ENCODE measurements at regions of chr4 and their contacts with region 1.

Region 1: DNA sequence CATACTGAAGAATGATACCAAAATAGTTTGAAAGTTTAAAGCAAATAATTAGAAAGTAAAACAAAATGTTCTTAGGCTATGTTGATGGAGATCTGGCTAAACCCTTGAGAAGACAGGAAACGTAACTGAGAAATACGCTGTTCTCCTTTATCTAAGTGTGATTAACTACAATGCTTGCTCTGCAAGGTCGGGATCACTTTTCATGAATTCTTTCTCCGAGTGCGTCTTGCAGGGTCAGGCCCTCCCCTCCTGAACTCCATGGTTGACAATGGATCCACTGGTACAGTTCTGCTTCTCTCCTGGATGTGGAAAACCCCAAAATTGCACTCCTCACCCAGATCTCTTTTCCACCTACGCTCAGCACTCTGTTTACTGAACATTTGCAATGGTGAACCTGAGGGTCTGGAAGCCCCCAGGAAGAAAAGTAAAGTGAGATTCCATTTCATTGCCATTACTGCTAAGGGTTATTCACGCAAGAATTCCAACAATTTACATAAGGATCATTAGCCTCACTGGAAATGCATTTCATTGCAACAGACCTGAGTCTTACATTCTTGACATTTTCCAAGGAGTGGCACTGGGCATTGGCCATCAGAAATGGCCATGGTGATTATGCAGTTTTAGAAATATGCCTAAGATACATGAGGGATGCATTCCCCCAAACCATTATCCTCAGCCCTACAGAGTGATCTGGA is 24.6 kb upstream of the WWC2 start:
- DNase-seq: no peak
- ATAC-seq: no peak
- H3K4me3 ChIP-seq: no peak overlapping the region
- H3K27ac ChIP-seq: no peak overlapping the region
- H3K4me1 ChIP-seq: no peaks in the 10 kb centered on the region
- H3K27me3 ChIP-seq: no peaks in the 10 kb centered on the region

Region 2: GRCh38 chr4:183014361-183015084 is 59.9 kb before region 1 on chr4:
- intact Hi-C with region 1: no loop called
- DNase-seq: no peak
- ATAC-seq: no peak
- H3K4me3 ChIP-seq: no peak overlapping the region
- H3K27ac ChIP-seq: no peak overlapping the region
- H3K4me1 ChIP-seq: no peaks in the 10 kb centered on the region
- H3K27me3 ChIP-seq: peaks cover 0 to 1% of the 10 kb centered on the region in 2 donors

Region 3: GRCh38 chr4:183256756-183257385 is 182.4 kb after region 1 on chr4:
- intact Hi-C with region 1: loop called (anchors 2 kb)
- DNase-seq: peak; percentile 71 to 85
- ATAC-seq: peak; percentile 80
- H3K4me3 ChIP-seq: no peak overlapping the region
- H3K27ac ChIP-seq: no peak overlapping the region
- H3K4me1 ChIP-seq: no peaks in the 10 kb centered on the region
- H3K27me3 ChIP-seq: peaks cover 0 to 1% of the 10 kb centered on the region in 2 donors

Region 4: GRCh38 chr4:183261953-183262775 is 187.7 kb after region 1 on chr4:
- intact Hi-C with region 1: loop called (anchors 2 kb)
- DNase-seq: peak; percentile 83 to 88
- ATAC-seq: peak; percentile 93
- H3K4me3 ChIP-seq: no peak overlapping the region
- H3K27ac ChIP-seq: no peak overlapping the region
- H3K4me1 ChIP-seq: no peaks in the 10 kb centered on the region
- H3K27me3 ChIP-seq: no peaks in the 10 kb centered on the region

Measured in aorta (tissue), 5 donors.